Astrocyte of the cerebellum (primary cell): ENCODE measurements at regions of chr12 and their contacts with region 1.

Region 1: DNA sequence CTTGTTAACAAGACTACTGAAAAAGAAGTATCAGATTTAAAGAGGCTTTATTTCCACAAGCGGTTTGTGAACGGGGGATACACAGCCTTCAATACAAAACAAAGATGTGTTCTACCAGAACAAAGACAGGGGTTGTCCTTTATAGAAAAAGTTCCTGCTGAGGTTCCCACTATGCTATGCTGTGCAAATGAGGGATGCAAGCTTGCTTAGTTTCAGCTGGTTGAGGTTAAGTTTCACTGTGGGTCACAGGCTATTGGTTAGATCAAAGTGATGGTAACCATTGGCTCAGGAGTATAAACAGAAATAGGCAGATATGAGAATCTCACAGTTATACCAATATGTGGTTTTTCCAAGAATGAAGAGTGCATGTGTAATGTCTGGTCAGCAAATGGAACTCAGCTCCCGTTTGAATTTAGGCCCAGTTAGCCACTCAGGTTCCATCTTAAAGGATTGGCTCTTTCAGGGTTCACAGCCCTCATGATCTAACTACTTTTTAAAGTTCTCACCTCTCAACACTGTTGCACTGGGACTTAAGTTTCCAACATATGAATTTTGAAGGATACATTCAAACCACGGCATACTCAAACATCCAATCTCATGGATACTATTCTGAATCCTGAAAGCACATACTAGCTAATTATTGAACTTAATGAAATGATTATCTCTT is 215.4 kb upstream of the DCN start:
- DNase-seq: no peak
- H3K4me3 ChIP-seq: no peak overlapping the region
- CTCF ChIP-seq: no peak

Region 2: DNA sequence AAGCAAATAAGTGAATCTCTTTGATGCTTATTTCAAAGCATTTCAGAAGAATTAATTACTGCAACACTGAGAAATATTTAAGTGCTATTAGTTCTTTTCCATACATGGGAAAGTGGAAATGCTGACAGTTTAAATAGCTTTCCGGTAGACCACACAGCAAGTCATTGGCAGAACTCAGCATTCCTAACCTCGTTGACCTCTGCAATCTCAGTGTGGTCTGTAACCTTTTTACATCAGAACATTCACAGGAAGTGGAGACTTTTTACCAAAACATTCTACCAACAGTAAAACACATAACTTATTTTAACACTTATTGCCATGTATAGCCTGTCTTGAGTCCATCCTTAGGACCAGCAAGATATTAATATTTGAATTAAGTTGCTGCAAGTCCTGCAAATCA is 34.1 kb after region 1 on chr12:
- in situ Hi-C with region 1: loop called (anchors 5 kb)
- DNase-seq: peak; percentile 31
- H3K4me3 ChIP-seq: no peak overlapping the region
- CTCF ChIP-seq: no peak

Region 3: DNA sequence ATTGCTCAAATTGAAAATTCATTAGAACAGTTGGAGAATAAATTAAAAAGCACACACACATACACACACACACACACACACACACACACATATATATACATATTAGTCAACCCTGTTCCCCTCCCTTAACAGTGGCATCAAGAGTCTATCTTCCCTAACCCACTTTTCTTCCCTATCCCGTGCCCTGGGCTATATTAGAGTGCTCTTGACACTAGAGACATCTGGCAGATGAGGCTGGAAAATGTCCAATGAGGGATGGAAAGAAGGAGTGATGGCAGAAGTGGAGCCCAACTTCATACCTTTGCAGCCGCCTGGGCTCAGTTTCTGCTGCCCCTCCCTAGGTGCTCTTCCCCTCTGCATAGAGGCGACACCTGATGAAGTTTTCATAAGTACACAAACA is 1807.4 kb after region 1 on chr12:
- in situ Hi-C with region 1: no loop called
- DNase-seq: no peak
- H3K4me3 ChIP-seq: no peak overlapping the region
- CTCF ChIP-seq: no peak